Head of caudate nucleus (tissue), 42 donors: ENCODE measurements at regions of chr2 and their contacts with region 1.

Region 1: GRCh38 chr2:129923265-129924091 is 56.0 kb upstream of the RAB6C start:
- DNase-seq: peak in 38 of 42 donors; percentile 17 to 84 (median 64)

Region 2: DNA sequence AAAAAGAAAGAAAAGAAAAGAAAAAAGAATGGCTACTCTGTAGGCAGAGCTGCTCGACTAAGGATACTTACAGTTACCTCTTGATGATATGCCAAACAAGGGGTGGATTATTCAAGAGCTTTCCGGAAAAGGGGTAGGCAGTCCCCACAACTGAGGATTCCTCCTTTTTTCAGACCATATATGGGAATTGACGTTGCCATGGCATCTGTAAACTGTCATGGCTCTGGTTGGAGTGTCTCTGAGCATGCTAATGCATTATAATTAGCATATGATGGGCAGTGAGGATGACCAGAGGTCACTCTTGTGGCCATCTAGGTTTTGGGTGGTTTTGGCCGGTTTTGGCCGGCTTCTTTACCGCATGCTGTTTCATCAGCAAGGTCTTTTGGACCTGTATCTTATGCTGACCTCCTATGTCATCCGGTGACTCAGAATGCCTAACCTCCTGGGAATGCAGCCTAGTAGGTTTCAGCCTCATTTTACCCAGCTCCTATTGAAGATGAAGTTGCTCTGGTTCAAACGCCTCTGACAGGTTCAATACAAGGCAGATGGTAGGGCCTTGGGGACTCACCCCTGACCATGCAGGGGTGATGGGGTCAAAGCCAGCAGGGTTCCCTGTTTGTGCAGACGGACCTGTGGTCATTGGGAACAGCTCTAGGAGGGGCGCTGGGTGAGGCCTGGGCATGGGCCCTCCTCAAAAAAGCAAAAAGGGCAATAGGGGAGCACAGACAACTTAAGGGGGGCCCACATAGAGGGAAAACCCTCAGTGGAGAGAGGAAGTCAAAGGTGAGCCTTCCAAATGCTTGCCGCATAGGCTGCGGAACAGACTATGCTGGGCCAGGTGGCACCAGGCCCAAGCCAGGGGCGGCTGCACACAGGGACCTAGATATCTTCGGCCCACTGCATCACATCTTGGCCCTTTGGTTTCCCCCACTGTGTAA is 195.2 kb before region 1 on chr2:
- intact Hi-C with region 1: no loop called
- DNase-seq: peak in 2 of 42 donors; percentile 10 to 24

Region 3: DNA sequence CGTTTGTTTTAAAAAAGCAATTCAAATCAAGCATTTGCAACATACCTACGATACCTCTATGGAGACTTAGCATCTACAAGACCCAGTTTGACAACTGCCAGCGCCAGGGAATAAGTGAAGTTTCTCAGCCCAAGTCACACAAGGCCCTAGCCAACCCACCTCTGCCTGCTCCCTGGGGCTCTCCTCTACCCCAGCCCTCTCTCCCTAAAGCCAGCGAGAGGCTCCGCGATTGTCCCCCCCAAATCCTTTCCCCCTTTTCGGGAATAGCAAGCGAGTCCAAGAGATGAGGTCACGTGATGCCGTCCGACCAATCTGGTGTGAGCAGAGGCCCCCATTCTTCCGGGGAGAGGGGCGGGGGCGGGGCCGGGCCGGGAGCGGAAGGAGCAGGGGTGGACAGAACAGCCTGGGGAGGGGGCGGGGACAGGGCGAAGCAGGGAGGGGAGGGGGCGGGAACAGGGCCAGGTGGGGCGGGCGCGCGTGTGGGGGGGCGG is 46.1 kb before region 1 on chr2:
- intact Hi-C with region 1: loop called (anchors 5 kb)
- DNase-seq: peak; percentile 91 to 98 (median 95)